ENCODE measurements at regions of chr2 and their contacts with region 1.

Region 1: GRCh38 chr2:235026649-235027557 is 75.1 kb downstream of the SH3BP4 start:
- DNase-seq: peak; percentile 46 to 93 (median 87)
- H3K4me3 ChIP-seq: peak overlapping the region in 1 of 4 donors; percentile 45
- H3K27ac ChIP-seq: peak overlapping the region; percentile 56 to 87 (median 67)
- H3K4me1 ChIP-seq: peaks cover 15 to 20% of the 10 kb centered on the region in 2 donors
- H3K27me3 ChIP-seq: no peaks in the 10 kb centered on the region
- CTCF ChIP-seq: no peak
- POLR2A ChIP-seq: no peak

Region 2: DNA sequence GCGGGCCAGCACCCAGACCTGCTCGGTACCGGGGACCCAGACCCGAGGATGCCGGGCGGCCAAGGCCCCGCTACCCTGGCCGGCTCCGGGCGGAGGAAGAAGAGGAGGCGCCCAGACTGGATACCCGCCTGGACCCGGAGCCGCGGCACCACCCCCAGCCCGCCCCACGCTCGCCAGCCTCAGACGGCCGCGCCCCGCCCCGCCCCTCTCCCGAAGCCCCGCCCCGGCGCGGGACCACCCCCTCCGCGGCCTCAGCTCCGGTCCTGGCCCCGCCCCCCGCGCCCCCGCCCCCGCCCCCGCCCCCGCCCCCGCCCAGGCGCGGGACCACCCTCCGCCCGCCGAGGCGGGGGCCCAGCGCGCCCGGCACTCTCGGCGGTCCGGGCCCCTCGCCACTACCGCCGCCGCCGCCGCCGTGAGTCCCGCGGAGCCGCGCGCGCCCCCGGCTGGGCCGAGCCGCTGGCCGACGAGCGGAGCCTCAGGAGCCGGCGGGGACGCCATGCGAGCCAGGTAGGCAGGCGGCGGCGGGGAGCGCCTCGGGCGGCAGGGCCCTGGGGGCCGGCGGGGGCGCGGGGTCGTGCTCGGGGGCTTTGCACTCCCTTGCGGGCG is 75.1 kb before region 1 on chr2 and contains the start of gene SH3BP4:
- intact Hi-C with region 1: loop called in 1 of 2 experiments (anchors 10 kb)
- DNase-seq: peak; percentile 75 to 88 (median 84)
- H3K4me3 ChIP-seq: peak within 1 kb of the TSS in 3 of 4 donors; percentile 30 to 90 (median 81)
- H3K27ac ChIP-seq: peak within 1 kb of the TSS in 3 of 5 donors; percentile 62 to 76 (median 64)
- H3K4me1 ChIP-seq: peaks cover 10 to 18% of the 10 kb centered on the region in 2 donors
- H3K27me3 ChIP-seq: no peaks in the 10 kb centered on the region
- CTCF ChIP-seq: no peak
- POLR2A ChIP-seq: peak in 1 of 2 donors; percentile 2
- total RNA-seq, gene SH3BP4: 5.1 to 26.9 (median 21.8) TPM

Measured in adrenal gland (tissue), 19 donors.